ENCODE measurements at regions of chr10 and their contacts with region 1.

Region 1: DNA sequence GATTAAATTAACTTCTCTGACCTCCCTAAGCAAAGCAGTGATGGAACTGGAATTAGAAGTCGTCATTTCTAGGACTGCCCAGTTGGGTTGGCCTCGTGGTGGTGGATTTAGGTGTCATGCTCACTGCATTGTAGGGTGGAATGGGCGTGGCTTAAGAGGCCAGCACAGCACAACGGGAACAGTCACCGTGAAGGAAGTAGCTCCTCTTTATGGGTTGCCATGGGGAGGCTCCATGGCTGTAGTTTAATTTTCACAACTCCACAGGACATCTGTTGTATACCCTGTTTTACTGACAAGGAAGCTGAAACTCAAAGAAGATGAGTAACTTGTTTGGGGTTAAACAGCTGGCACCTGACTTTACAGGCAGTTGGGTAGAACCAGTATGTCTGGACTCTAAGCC is 208.3 kb downstream of the CELF2 start:
- DNase-seq: no peak
- ATAC-seq: peak; percentile 8
- H3K4me3 Mint-ChIP-seq: no peak overlapping the region
- H3K27ac Mint-ChIP-seq: peak overlapping the region; percentile 96
- H3K4me1 Mint-ChIP-seq: peaks cover 85% of the 10 kb centered on the region
- H3K27me3 Mint-ChIP-seq: no peaks in the 10 kb centered on the region
- CTCF ChIP-seq: no peak

Region 2: GRCh38 chr10:10520491-10521385 is 705.2 kb before region 1 on chr10:
- CTCF ChIA-PET with region 1: no interaction called
- POLR2A ChIA-PET with region 1: no interaction called
- intact Hi-C with region 1: no loop called
- DNase-seq: no peak
- ATAC-seq: peak; percentile 76
- H3K4me3 Mint-ChIP-seq: no peak overlapping the region
- H3K27ac Mint-ChIP-seq: no peak overlapping the region
- H3K4me1 Mint-ChIP-seq: peaks cover 6% of the 10 kb centered on the region
- H3K27me3 Mint-ChIP-seq: peaks cover 2% of the 10 kb centered on the region
- CTCF ChIP-seq: no peak

Region 3: DNA sequence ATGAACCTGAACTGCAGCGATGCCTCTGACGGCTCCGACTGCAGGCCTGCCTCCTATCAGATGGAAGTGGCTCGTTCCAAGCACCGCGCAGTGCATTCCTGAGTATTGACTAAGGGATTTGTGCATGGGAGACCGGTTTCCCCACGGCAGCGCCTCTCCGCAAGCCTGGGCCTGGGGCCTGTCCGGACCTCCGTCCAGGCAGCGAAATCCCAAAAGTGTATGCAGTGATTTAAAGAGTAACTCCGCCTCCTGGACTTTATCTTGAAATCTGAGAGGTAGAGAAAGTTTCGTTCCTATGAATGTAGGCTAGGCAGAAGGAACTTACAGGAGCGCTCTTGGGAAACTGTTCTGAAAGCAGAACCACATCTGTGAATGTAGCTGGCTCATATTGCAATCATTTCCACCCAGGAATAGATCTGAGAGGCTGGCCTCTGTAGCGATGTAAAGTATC is 314.4 kb before region 1 on chr10:
- CTCF ChIA-PET with region 1: no interaction called
- POLR2A ChIA-PET with region 1: no interaction called
- intact Hi-C with region 1: no loop called
- DNase-seq: no peak
- ATAC-seq: no peak
- H3K4me3 Mint-ChIP-seq: no peak overlapping the region
- H3K27ac Mint-ChIP-seq: no peak overlapping the region
- H3K4me1 Mint-ChIP-seq: no peaks in the 10 kb centered on the region
- H3K27me3 Mint-ChIP-seq: peaks cover 8% of the 10 kb centered on the region
- CTCF ChIP-seq: no peak

Region 4: DNA sequence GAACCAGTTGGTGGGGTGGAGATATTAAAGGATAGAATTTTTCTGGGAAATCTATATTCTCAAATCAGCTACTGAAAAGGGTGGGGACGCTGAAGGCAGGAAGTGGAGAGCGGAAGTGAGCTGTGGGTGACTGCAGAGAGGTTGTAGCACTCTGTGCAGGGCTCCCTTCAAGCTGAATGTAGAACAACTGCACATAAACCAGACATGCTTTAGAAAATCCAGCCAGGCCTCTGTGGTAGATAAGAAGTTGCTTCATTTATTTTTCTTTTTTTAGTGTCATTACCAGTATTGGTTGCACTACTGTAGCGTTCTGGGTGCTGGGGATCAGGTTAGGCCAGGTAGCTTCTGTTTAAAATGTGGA is 80.5 kb before region 1 on chr10:
- CTCF ChIA-PET with region 1: no interaction called
- POLR2A ChIA-PET with region 1: interaction called, 14 read pairs
- intact Hi-C with region 1: no loop called
- DNase-seq: no peak
- ATAC-seq: peak; percentile 79
- H3K4me3 Mint-ChIP-seq: peak overlapping the region; percentile 80
- H3K27ac Mint-ChIP-seq: peak overlapping the region; percentile 97
- H3K4me1 Mint-ChIP-seq: peaks cover 92% of the 10 kb centered on the region
- H3K27me3 Mint-ChIP-seq: no peaks in the 10 kb centered on the region
- CTCF ChIP-seq: no peak

Region 5: DNA sequence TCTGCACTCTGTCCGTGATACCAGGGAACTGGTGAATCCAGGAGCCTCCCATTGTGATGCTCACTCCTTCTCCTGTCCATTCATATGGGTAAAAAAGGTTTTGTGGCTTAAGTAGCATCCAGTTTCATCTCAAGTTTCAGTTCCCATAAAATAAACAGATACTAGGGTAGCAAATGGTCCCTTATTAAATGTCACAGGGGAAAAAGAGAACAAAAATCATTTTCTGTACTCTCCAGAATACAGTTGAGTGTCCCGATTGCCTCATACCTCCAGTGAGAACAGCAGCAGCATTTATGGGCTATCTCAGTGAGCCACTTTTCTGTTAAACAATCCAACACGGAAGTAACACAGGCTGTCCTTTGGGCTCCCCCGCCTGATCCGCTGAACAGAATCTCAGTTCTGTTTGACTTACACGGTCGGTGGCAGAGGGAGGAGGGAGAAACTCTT is 28.6 kb before region 1 on chr10:
- CTCF ChIA-PET with region 1: interaction called, 9 read pairs
- POLR2A ChIA-PET with region 1: interaction called, 8 read pairs
- intact Hi-C with region 1: loop called (anchors 1 kb)
- DNase-seq: no peak
- ATAC-seq: peak; percentile 82
- H3K4me3 Mint-ChIP-seq: peak overlapping the region; percentile 81
- H3K27ac Mint-ChIP-seq: peak overlapping the region; percentile 94
- H3K4me1 Mint-ChIP-seq: peaks cover 97% of the 10 kb centered on the region
- H3K27me3 Mint-ChIP-seq: no peaks in the 10 kb centered on the region
- CTCF ChIP-seq: no peak

Region 6: DNA sequence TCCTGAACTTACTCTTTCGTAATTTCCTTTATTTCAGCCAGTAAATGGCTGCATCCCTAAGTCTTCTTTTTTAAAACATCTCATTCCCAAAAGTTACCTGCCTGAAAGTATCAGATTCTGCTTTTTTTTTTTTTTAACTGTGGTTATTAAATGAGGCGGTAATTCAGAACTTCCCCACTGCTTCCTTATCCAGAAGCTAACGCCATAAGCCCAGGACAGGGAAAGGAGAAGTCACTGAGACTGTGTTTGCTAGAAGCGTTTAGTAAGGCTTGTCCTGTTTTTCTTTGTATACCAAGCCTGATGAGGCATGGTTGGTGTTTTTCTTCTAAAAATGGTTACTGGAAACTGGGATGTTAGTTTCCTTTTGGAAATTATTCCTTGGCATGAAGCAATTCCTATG is 10.5 kb before region 1 on chr10:
- CTCF ChIA-PET with region 1: interaction called, 4 read pairs
- POLR2A ChIA-PET with region 1: interaction called, 20 read pairs
- intact Hi-C with region 1: loop called (anchors 1 kb)
- DNase-seq: no peak
- ATAC-seq: no peak
- H3K4me3 Mint-ChIP-seq: no peak overlapping the region
- H3K27ac Mint-ChIP-seq: peak overlapping the region; percentile 61
- H3K4me1 Mint-ChIP-seq: peaks cover 75% of the 10 kb centered on the region
- H3K27me3 Mint-ChIP-seq: no peaks in the 10 kb centered on the region
- CTCF ChIP-seq: no peak

Region 7: DNA sequence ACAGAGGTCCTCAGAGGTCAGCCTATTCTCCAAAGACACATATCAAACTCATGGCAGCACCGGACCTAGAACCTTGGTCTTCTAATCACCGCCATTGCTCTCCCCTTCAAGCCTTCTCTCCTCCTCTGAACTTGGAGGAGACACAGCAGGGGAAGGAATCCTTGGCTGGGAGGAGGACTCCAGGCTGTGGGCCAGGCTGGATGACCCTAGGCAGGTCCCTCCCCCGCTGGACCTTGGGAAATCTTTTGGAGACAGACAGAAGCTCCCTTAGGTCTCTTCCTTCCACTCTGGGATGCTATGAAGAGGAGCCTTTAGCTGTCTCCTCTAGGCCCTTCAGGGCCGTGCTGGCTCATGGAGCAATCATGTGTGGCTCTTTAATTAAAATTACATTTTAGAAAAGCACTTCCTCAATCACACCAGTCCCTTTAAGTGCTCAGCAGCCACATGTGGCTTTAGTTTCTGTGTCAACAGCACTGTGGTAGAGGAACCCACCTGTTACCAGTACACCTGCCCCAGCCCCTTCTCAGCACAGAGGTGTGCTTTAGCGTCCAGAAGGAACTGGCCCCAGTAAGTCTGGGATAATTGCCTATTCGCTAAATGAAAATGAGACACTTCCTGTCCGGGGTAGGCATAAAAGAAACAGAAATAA is 30.0 kb after region 1 on chr10:
- CTCF ChIA-PET with region 1: interaction called, 8 read pairs
- POLR2A ChIA-PET with region 1: interaction called, 5 read pairs
- intact Hi-C with region 1: loop called (anchors 2 kb)
- DNase-seq: no peak
- ATAC-seq: peak; percentile 76
- H3K4me3 Mint-ChIP-seq: no peak overlapping the region
- H3K27ac Mint-ChIP-seq: peak overlapping the region; percentile 84
- H3K4me1 Mint-ChIP-seq: peaks cover 77% of the 10 kb centered on the region
- H3K27me3 Mint-ChIP-seq: no peaks in the 10 kb centered on the region
- CTCF ChIP-seq: no peak